Left ventricle myocardium inferior (tissue), 1 donor: ENCODE measurements at regions of chr2 and their contacts with region 1.

Region 1: GRCh38 chr2:160994141-160995002 is 165.9 kb upstream of the TANK start:
- DNase-seq: peak; percentile 25
- H3K4me3 ChIP-seq: peak overlapping the region; percentile 12
- H3K27ac ChIP-seq: peak overlapping the region; percentile 77
- H3K4me1 ChIP-seq: peaks cover 19% of the 10 kb centered on the region
- H3K27me3 ChIP-seq: no peaks in the 10 kb centered on the region
- CTCF ChIP-seq: peak; percentile 93

Region 2: GRCh38 chr2:160109936-160110673 is 884.3 kb before region 1 on chr2:
- intact Hi-C with region 1: loop called (anchors 10 kb)
- DNase-seq: peak; percentile 36
- H3K4me3 ChIP-seq: no peak overlapping the region
- H3K27ac ChIP-seq: no peak overlapping the region
- H3K4me1 ChIP-seq: no peaks in the 10 kb centered on the region
- H3K27me3 ChIP-seq: no peaks in the 10 kb centered on the region
- CTCF ChIP-seq: peak; percentile 85

Region 3: DNA sequence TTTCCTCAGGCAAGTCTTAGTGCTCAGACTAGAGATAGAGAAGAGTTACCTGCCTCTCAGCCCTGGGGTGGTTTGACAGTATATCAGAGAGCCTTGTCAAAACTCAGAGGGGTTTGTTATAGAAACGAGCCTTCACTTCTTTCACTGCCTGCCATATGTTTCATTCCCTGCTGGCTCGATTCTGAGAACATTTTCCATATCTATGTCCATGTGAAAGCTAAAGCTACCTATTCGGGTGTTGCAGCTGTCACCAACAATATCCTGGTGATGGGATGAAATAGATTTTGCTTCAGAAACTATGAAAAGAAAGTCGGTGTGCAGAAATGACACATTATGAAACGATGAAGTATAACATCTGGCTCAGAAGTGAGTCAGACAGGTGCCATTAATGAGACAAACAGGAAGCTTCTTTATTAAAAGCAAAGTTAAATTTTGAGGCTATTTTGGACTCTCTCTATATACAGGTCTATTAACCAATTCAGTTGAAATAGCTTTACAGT is 109.7 kb after region 1 on chr2:
- intact Hi-C with region 1: no loop called
- DNase-seq: no peak
- H3K4me3 ChIP-seq: no peak overlapping the region
- H3K27ac ChIP-seq: no peak overlapping the region
- H3K4me1 ChIP-seq: no peaks in the 10 kb centered on the region
- H3K27me3 ChIP-seq: no peaks in the 10 kb centered on the region
- CTCF ChIP-seq: no peak

Region 4: DNA sequence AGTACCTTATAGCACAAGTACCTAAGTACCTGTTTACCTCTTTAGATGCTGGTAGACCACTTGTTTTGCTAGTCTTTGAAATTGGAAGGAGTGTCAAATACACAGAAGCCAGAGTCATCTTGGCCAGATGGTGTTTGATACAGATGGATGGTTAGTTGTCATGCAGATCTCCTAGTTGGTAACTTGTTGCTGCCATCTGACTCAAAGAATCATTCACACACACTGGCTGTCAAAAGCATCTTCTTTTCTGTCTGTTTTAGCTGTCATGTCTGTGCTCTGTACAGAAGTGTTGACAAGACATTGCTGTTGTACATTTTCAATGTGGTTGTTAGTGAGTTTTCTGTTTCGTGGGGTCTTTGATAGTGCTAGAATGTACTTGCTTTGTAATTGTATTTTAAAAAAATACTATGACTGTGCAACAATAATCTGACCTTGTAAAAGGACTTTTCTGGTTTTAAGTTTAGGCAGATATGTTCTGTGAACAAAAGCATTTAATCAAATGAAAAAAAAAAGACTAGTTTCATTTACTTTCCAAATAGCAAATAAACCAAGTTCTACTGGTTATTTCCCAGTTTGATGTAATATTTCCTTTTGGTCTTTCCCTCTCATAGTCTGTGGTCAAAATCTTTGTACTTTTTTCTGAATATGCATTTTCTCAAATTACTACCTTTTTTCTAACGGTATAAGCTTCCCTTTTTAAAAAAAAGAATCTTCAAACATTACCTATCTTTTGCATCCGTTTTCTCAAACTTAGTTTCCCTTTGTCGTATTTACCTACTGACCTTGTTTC is 205.7 kb after region 1 on chr2:
- intact Hi-C with region 1: no loop called
- DNase-seq: no peak
- H3K4me3 ChIP-seq: no peak overlapping the region
- H3K27ac ChIP-seq: no peak overlapping the region
- H3K4me1 ChIP-seq: peaks cover 10% of the 10 kb centered on the region
- H3K27me3 ChIP-seq: no peaks in the 10 kb centered on the region
- CTCF ChIP-seq: no peak

Region 5: DNA sequence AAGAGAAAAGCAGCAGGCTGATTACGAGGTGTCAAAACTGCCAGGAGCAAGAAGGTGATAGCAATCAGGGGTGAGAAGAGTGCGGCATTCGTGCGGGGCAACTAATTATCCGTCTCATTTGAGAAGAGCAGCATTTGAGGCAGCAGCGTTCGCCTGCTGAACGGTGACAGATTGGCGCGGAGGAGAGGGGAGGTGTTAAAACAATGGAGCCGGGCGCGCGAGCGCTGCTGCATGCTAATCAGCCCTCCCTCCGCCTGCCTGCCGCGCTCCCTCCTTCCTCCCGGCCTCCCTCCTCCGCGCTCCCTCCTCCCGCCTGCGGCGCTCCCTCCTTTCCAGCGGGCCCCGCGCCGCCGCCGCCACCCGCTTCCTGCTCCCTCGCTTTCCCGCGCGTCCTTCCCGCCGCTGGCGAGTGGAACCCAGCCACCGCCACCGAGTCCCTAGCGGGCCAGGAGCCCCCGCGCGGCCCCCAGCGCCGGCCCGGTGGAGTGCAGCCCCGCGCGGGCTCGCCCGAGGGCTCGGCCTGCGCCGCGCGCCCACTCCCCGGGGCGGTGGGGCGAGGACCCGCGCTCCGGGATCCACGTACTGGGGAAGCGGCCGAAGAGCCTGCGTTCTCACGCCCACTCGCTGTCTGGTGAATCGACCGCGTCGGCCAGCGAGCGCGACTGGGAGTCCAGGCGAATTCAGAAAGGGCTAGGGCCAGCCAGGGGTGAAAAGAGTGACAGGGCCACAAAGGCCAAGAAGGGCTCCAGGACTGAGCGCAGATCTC is 244.4 kb after region 1 on chr2:
- intact Hi-C with region 1: no loop called
- DNase-seq: peak; percentile 69
- H3K4me3 ChIP-seq: peak overlapping the region; percentile 72
- H3K27ac ChIP-seq: peak overlapping the region; percentile 53
- H3K4me1 ChIP-seq: peaks cover 17% of the 10 kb centered on the region
- H3K27me3 ChIP-seq: no peaks in the 10 kb centered on the region
- CTCF ChIP-seq: no peak